GM12878 (cell line): ENCODE measurements at regions of chr10 and their contacts with region 1.

Region 1: GRCh38 chr10:31318854-31319601 is at the start of gene ZEB1:
- DNase-seq: no peak
- ATAC-seq: peak; percentile 52
- H3K4me3 ChIP-seq: peak within 1 kb of the TSS; percentile 84
- H3K27ac ChIP-seq: peak within 1 kb of the TSS; percentile 100
- H3K4me1 ChIP-seq: peaks cover 7% of the 10 kb centered on the region
- H3K27me3 ChIP-seq: no peaks in the 10 kb centered on the region
- CTCF ChIP-seq: peak; percentile 29 to 53 (median 31); a peak in 4 of 6 replicates
- EP300 ChIP-seq: peak in 1 of 2 experiments; percentile 41; a peak in 1 of 4 replicates
- POLR2A ChIP-seq: peak; percentile 78
- RAD21 ChIP-seq: 0 out of 2 replicates have a peak, but pooled peaks have one; percentile 8
- polyA plus RNA-seq, gene ZEB1: 10.4 to 16.8 TPM

Region 2: GRCh38 chr10:30722956-30723620 is 595.9 kb before region 1 on chr10:
- CTCF ChIA-PET with region 1: no interaction called
- POLR2A ChIA-PET with region 1: no interaction called
- RAD21 ChIA-PET with region 1: no interaction called
- SMC1A ChIA-PET with region 1: no interaction called
- in situ Hi-C with region 1: no loop called
- intact Hi-C with region 1: loop called (anchors 5 kb)
- DNase-seq: no peak
- ATAC-seq: no peak
- H3K4me3 ChIP-seq: no peak overlapping the region
- H3K27ac ChIP-seq: no peak overlapping the region
- H3K4me1 ChIP-seq: peaks cover 6% of the 10 kb centered on the region
- H3K27me3 ChIP-seq: no peaks in the 10 kb centered on the region
- CTCF ChIP-seq: no peak
- EP300 ChIP-seq: no peak
- POLR2A ChIP-seq: no peak
- RAD21 ChIP-seq: no peak

Region 3: DNA sequence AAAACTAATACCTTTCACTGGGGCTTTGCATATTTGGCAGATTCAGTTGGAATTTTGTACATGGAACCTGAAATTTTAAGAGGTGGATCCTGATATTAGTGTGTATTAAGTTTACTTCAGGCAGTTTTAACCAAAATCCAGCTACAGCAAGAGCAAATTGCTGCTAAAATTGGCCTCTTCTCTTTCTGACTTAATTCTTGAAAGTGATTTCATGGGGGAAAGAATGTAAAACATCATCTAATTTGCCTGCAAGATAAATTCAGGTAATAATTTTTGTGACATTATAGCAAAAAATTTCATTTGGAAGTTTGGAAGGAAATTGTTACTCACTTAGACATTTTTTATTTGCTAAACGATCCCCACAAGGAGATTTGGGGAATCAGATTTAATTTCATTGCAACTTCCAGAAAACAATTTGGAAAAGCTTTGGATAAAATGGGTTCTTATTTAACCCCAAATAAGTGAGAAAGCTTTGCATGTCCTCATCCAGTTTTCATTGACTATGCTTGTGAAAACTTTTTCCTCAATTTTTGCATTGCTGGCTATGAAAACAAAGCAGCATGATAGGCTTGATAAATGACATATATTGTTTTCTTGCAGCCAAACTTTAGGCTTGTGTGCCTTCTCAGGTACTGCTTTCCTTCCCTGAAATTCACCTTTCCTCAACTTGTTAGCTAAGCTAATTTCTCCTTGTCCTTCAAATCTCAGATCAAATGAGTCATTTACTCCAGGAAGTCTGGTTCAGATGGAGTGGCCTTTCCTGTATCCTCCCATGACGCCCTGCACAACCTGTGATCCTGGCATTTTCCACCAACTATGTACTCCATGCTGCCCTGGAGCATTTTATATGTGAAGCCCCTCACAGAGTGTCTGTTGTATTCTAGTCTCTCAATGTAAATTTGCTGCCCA is 260.0 kb before region 1 on chr10:
- CTCF ChIA-PET with region 1: no interaction called
- POLR2A ChIA-PET with region 1: no interaction called
- RAD21 ChIA-PET with region 1: no interaction called
- SMC1A ChIA-PET with region 1: no interaction called
- in situ Hi-C with region 1: no loop called
- intact Hi-C with region 1: no loop called
- DNase-seq: no peak
- ATAC-seq: no peak
- H3K4me3 ChIP-seq: no peak overlapping the region
- H3K27ac ChIP-seq: no peak overlapping the region
- H3K4me1 ChIP-seq: no peaks in the 10 kb centered on the region
- H3K27me3 ChIP-seq: no peaks in the 10 kb centered on the region
- CTCF ChIP-seq: no peak
- EP300 ChIP-seq: no peak
- POLR2A ChIP-seq: no peak
- RAD21 ChIP-seq: no peak

Region 4: DNA sequence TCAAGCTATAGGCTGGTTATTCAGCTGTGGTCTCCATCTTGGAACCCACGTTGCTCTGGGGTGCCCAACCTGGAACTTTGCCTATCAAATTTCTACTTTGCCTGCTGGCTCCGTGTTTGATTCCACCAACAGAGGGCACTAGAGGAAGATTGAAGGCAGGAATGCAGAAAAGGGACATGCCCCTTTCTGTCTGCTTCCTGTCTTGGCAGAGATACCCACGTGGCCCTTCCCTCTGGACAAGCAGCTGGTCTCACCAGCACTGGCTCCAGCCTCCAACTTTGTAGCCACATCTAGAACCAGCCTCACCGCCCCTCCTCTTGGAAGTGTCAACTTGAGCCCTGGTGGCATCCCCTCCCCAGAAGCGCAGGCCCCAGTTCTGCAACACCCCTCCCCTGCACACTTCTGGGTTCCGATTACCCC is 235.3 kb before region 1 on chr10:
- CTCF ChIA-PET with region 1: interaction called, 3 read pairs
- POLR2A ChIA-PET with region 1: no interaction called
- RAD21 ChIA-PET with region 1: interaction called, 3 read pairs
- SMC1A ChIA-PET with region 1: interaction called, 9 read pairs
- in situ Hi-C with region 1: no loop called
- intact Hi-C with region 1: loop called (anchors 10 kb)
- DNase-seq: peak; percentile 26
- ATAC-seq: peak; percentile 87
- H3K4me3 ChIP-seq: no peak overlapping the region
- H3K27ac ChIP-seq: no peak overlapping the region
- H3K4me1 ChIP-seq: no peaks in the 10 kb centered on the region
- H3K27me3 ChIP-seq: no peaks in the 10 kb centered on the region
- CTCF ChIP-seq: peak; percentile 55 to 65 (median 62)
- EP300 ChIP-seq: no peak
- POLR2A ChIP-seq: no peak
- RAD21 ChIP-seq: peak; percentile 77

Region 5: DNA sequence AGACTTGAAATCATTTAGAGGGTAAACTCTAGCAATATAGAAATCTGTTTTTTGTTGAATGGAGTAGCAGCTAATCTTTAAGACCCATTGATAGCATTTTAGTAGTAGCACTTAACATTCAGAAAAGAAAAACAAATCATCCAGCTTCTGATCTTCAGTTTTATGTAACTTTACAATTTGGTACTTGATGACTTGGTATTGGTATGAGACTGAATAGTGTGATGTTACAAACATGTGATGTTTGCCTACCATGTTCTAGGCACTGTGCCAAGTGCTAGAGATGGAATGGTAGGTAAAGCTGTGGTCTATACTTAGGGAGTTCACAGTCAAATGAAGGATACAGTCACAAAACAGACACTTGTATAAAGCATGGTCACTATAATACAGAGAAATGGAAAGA is 21.3 kb after region 1 on chr10:
- CTCF ChIA-PET with region 1: interaction called, 5 read pairs
- POLR2A ChIA-PET with region 1: no interaction called
- RAD21 ChIA-PET with region 1: interaction called, 10 read pairs
- SMC1A ChIA-PET with region 1: interaction called, 21 read pairs
- in situ Hi-C with region 1: no loop called
- intact Hi-C with region 1: no loop called
- DNase-seq: no peak
- ATAC-seq: peak; percentile 36
- H3K4me3 ChIP-seq: no peak overlapping the region; the same call in 1 of the 2 replicates
- H3K27ac ChIP-seq: peak overlapping the region; percentile 43; the same call in 1 of the 2 replicates
- H3K4me1 ChIP-seq: peaks cover 25% of the 10 kb centered on the region
- H3K27me3 ChIP-seq: no peaks in the 10 kb centered on the region
- CTCF ChIP-seq: no peak
- EP300 ChIP-seq: no peak
- POLR2A ChIP-seq: no peak
- RAD21 ChIP-seq: no peak

Region 6: GRCh38 chr10:31383810-31384588 is 65.0 kb after region 1 on chr10:
- CTCF ChIA-PET with region 1: interaction called, 3 read pairs
- POLR2A ChIA-PET with region 1: interaction called, 7 read pairs
- RAD21 ChIA-PET with region 1: interaction called, 10 read pairs
- SMC1A ChIA-PET with region 1: interaction called, 3 read pairs
- in situ Hi-C with region 1: no loop called
- intact Hi-C with region 1: loop called (anchors 2 kb)
- DNase-seq: peak; percentile 93
- ATAC-seq: peak; percentile 94
- H3K4me3 ChIP-seq: peak overlapping the region; percentile 49
- H3K27ac ChIP-seq: peak overlapping the region; percentile 97
- H3K4me1 ChIP-seq: peaks cover 19% of the 10 kb centered on the region
- H3K27me3 ChIP-seq: no peaks in the 10 kb centered on the region
- CTCF ChIP-seq: no peak
- EP300 ChIP-seq: peak; percentile 88 to 94
- POLR2A ChIP-seq: peak; percentile 60; the same call in 1 of the 2 replicates
- RAD21 ChIP-seq: peak; percentile 16; the same call in 1 of the 2 replicates

Region 7: GRCh38 chr10:31526681-31527080 is 207.7 kb after region 1 on chr10:
- CTCF ChIA-PET with region 1: no interaction called
- POLR2A ChIA-PET with region 1: no interaction called
- RAD21 ChIA-PET with region 1: no interaction called
- SMC1A ChIA-PET with region 1: no interaction called
- in situ Hi-C with region 1: no loop called
- intact Hi-C with region 1: no loop called
- DNase-seq: no peak
- ATAC-seq: no peak
- H3K4me3 ChIP-seq: no peak overlapping the region
- H3K27ac ChIP-seq: no peak overlapping the region
- H3K4me1 ChIP-seq: no peaks in the 10 kb centered on the region
- H3K27me3 ChIP-seq: no peaks in the 10 kb centered on the region
- CTCF ChIP-seq: no peak
- EP300 ChIP-seq: no peak
- POLR2A ChIP-seq: no peak
- RAD21 ChIP-seq: no peak

Region 8: DNA sequence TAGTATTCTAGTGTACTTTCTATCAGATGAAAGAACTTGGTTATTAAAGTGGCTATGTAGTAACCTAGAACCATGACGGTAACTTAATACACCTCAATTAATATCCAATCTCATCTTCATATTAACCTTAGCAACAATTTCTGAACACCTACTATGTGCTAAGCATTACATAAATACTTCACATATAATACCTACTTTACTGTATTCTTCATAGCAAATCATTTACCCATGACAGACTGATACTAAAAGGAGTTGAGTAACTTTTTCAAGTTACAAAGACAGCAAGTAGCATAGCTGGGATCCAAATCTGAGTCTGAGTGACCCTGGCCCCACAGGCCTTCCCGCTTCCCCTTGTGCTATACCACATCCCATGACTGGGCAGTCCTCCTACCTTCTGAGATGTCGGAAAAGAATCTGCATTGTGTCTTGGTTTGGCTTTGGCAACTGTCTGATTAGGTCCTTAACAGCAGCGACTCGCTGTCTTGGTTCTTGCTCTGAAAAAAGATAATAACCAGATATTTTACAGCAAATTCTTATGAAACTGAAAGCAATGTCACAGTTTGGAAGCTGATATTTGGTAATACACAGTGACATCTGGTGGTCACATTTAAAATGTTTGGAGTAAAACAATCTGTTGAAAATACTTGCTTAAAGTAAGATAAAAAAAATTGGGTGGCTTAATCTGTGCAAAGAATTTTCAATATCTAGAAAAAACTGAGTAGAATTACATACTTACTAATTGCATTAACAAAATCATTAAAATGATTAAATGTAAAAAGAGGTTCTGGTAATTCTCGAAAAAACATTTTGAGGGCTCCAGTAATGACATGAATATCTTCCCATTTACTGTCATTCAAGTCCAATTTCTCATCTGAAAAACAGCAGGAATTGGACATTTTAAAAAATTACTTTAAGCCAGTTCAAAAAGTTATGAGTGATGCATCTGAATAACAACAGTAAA is 489.5 kb after region 1 on chr10:
- CTCF ChIA-PET with region 1: no interaction called
- POLR2A ChIA-PET with region 1: no interaction called
- RAD21 ChIA-PET with region 1: no interaction called
- SMC1A ChIA-PET with region 1: no interaction called
- in situ Hi-C with region 1: loop called (anchors 10 kb)
- intact Hi-C with region 1: loop called (anchors 5 kb)
- DNase-seq: peak; percentile 49
- ATAC-seq: peak; percentile 96
- H3K4me3 ChIP-seq: no peak overlapping the region
- H3K27ac ChIP-seq: peak overlapping the region; percentile 77
- H3K4me1 ChIP-seq: peaks cover 3% of the 10 kb centered on the region
- H3K27me3 ChIP-seq: no peaks in the 10 kb centered on the region
- CTCF ChIP-seq: peak; percentile 27 to 59 (median 42); a peak in 5 of 6 replicates
- EP300 ChIP-seq: no peak
- POLR2A ChIP-seq: no peak
- RAD21 ChIP-seq: peak; percentile 78